Ovary (tissue), 10 donors: ENCODE measurements at regions of chr6 and their contacts with region 1.

Region 1: GRCh38 chr6:170114956-170115855 is 175.7 kb downstream of the DLL1 start:
- DNase-seq: peak in 4 of 5 donors; percentile 35 to 97 (median 85)
- H3K4me3 ChIP-seq: no peak overlapping the region
- H3K27ac ChIP-seq: no peak overlapping the region
- H3K4me1 ChIP-seq: peaks cover 3% of the 10 kb centered on the region
- H3K27me3 ChIP-seq: no peaks in the 10 kb centered on the region
- CTCF ChIP-seq: no peak
- EP300 ChIP-seq: no peak
- POLR2A ChIP-seq: no peak

Region 2: DNA sequence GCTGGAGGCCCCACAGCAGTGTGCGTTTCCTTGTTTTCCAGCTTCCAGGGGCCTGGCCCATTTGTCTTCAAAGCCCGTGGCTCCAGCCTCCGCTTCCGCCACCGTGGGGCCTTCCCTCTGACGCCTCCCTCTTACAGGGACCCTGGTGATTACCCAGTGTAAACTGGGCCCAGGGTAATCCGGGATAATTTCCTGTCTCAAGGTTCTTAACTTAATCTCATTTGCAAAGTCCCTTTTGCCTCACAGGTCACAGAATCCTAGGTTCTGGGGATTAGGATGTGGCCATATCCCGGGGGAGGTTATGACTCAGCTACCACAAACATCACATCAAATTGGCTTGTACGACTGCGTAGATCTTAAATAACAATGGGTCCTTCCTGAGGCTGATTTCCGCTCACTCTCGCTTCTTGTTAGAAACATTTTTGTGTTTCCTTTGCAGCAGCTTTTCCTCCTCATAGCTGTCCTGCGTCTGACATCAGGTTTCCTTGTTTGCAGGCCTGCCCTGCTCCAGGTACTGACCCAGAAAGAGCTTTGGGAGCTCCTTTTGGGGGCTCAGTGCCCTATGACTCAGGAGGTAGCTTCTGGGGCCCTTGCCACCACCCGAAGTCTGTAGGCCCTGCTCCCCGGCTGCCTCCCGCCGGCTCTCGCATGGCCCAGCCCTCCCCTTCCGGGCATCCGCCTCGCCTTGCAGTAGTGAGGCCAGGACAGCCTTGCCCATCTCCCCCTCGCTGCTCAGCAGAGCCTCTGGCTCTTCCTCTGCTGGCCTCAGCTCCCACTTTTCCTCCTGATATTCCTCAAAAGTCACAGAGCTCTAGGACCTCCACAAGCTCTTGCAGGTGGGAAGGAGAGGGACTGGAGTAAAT is 263.3 kb before region 1 on chr6:
- intact Hi-C with region 1: loop called in 1 of 4 experiments (anchors 10 kb)
- DNase-seq: peak in 1 of 5 donors; percentile 5
- H3K4me3 ChIP-seq: no peak overlapping the region
- H3K27ac ChIP-seq: no peak overlapping the region
- H3K4me1 ChIP-seq: no peaks in the 10 kb centered on the region
- H3K27me3 ChIP-seq: no peaks in the 10 kb centered on the region
- CTCF ChIP-seq: no peak
- EP300 ChIP-seq: no peak
- POLR2A ChIP-seq: no peak

Region 3: GRCh38 chr6:170265655-170266054 is 150.4 kb after region 1 on chr6:
- intact Hi-C with region 1: no loop called
- DNase-seq: no peak
- H3K4me3 ChIP-seq: no peak overlapping the region
- H3K27ac ChIP-seq: no peak overlapping the region
- H3K4me1 ChIP-seq: no peaks in the 10 kb centered on the region
- H3K27me3 ChIP-seq: no peaks in the 10 kb centered on the region
- CTCF ChIP-seq: no peak
- EP300 ChIP-seq: no peak
- POLR2A ChIP-seq: no peak